Breast epithelium (tissue), 4 donors: ENCODE measurements at regions of chr4 and their contacts with region 1.

Region 1: DNA sequence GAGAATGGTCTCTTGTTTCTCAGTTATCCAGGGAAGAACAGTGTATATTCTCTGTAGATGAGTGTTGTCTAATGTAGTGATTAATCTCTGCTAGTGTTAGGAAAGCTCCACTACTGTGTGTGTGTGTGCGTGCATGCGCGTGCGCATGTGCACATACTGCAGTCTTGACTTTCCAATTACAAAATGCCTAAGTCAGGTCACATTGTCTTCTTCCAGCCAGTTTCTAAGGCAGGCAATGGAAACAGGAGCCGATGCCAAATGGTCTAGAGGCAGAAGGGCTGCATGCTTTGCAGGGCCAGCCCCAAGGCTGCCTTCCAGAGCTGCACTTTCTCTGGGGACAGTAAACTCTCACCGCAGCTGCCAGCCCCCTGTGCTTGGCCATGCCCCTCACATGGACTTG is 30.5 kb upstream of the NAP1L5 start:
- DNase-seq: no peak
- H3K4me3 ChIP-seq: no peak overlapping the region
- H3K27ac ChIP-seq: no peak overlapping the region
- H3K4me1 ChIP-seq: no peaks in the 10 kb centered on the region
- H3K27me3 ChIP-seq: no peaks in the 10 kb centered on the region
- CTCF ChIP-seq: no peak
- POLR2A ChIP-seq: no peak

Region 2: DNA sequence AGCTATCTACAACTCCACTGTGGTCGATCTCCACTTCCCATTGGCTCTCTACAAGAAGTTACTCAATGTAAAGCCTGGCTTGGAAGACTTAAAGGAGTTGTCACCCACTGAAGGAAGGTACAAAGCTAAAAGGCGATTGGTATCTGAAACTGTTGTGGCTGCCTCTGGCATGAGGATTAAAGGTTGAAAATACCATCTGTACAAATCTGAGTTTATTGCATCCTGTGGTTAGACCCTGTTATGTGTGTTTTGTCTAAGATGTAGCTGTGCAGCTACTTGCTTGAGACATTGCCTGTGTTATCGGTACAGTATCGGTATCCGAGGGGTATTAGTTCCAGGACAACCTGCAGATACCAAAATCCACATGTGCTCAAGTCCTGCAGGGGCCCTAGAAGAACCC is 46.9 kb before region 1 on chr4:
- intact Hi-C with region 1: no loop called
- DNase-seq: no peak
- H3K4me3 ChIP-seq: no peak overlapping the region
- H3K27ac ChIP-seq: no peak overlapping the region
- H3K4me1 ChIP-seq: no peaks in the 10 kb centered on the region
- H3K27me3 ChIP-seq: no peaks in the 10 kb centered on the region
- CTCF ChIP-seq: no peak
- POLR2A ChIP-seq: no peak

Region 3: GRCh38 chr4:89000844-89001360 is 272.8 kb after region 1 on chr4:
- intact Hi-C with region 1: loop called (anchors 10 kb)
- DNase-seq: no peak
- H3K4me3 ChIP-seq: no peak overlapping the region
- H3K27ac ChIP-seq: no peak overlapping the region
- H3K4me1 ChIP-seq: peaks cover 0 to 5% of the 10 kb centered on the region in 2 donors
- H3K27me3 ChIP-seq: no peaks in the 10 kb centered on the region
- CTCF ChIP-seq: no peak
- POLR2A ChIP-seq: no peak

Region 4: GRCh38 chr4:89514811-89515210 is 786.7 kb after region 1 on chr4:
- intact Hi-C with region 1: no loop called
- DNase-seq: no peak
- H3K4me3 ChIP-seq: no peak overlapping the region
- H3K27ac ChIP-seq: no peak overlapping the region
- H3K4me1 ChIP-seq: no peaks in the 10 kb centered on the region
- H3K27me3 ChIP-seq: no peaks in the 10 kb centered on the region
- CTCF ChIP-seq: no peak
- POLR2A ChIP-seq: no peak